Activated T-helper 2 cell treated with anti-CD3 and anti-CD28 coated beads, Interferon-gamma antibody, Interleukin-2, Interleukin-4, amounts not matched to agents 10 μg/mL and 5 μg/mL and 100 μg/mL, durations not matched to agents 14 hours and 24 hours and 36 hours (primary cell): ENCODE measurements at regions of chr7 and their contacts with region 1.

Region 1: GRCh38 chr7:1503816-1504775 is at the start of gene INTS1:
- DNase-seq: peak; percentile 88
- H3K4me3 Mint-ChIP-seq: peak within 1 kb of the TSS; percentile 89
- H3K27ac Mint-ChIP-seq: peak within 1 kb of the TSS; percentile 80
- H3K4me1 Mint-ChIP-seq: peaks cover 37% of the 10 kb centered on the region
- H3K27me3 Mint-ChIP-seq: no peaks in the 10 kb centered on the region
- total RNA-seq, gene INTS1: 86.7 and 91.0 TPM in 2 replicates

Region 2: GRCh38 chr7:1459522-1459892 is 44.6 kb before region 1 on chr7:
- intact Hi-C with region 1: loop called (anchors 1 kb)
- DNase-seq: peak; percentile 95
- H3K4me3 Mint-ChIP-seq: no peak overlapping the region
- H3K27ac Mint-ChIP-seq: no peak overlapping the region
- H3K4me1 Mint-ChIP-seq: no peaks in the 10 kb centered on the region
- H3K27me3 Mint-ChIP-seq: peaks cover 6% of the 10 kb centered on the region

Region 3: GRCh38 chr7:1532483-1533424 is 28.7 kb after region 1 on chr7:
- intact Hi-C with region 1: loop called (anchors 1 kb)
- DNase-seq: peak; percentile 54
- H3K4me3 Mint-ChIP-seq: peak overlapping the region; percentile 88
- H3K27ac Mint-ChIP-seq: peak overlapping the region; percentile 87
- H3K4me1 Mint-ChIP-seq: peaks cover 23% of the 10 kb centered on the region
- H3K27me3 Mint-ChIP-seq: no peaks in the 10 kb centered on the region

Region 4: GRCh38 chr7:1545389-1546246 is 41.5 kb after region 1 on chr7:
- intact Hi-C with region 1: no loop called
- DNase-seq: no peak
- H3K4me3 Mint-ChIP-seq: no peak overlapping the region
- H3K27ac Mint-ChIP-seq: no peak overlapping the region
- H3K4me1 Mint-ChIP-seq: no peaks in the 10 kb centered on the region
- H3K27me3 Mint-ChIP-seq: no peaks in the 10 kb centered on the region

Region 5: DNA sequence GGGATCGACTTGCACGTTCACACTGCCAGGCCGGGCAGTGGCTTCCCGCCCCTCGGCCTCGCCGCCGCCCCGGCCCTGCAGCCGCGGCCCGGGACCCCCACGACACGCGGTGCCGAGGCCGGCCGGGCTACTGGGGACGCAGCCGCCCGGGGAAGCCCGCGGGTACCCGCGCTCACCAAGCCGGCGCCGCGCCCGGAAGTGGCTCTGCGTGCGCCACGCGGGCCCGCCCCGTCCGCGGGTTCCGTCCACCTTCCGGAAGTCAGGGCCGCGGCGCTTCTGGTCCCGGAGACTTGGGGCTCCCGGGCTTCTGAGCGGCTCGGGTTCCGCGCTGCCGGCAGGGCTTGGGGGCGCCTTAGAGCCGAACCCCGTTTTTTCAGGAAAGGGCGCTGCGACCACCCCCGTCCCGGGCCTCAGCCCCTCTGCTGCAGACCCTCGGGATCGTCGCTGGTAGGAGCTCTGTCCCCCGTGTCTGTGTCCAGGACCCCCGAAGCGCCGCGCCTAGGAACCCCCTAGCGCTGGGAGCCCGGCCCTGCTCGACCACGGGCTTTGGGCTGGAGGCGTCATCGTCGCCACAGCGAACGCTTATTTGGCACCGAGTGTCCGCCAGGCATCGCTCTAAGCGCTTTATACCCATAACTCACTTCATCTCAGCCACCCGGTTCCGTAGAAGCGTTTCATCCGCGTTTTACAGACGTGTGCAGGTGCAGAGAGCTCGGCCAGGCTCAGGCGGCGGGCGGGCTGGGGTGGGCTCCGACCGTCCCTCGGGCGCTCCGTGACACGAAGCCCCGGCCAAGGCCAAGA is 65.9 kb after region 1 on chr7 and contains the start of gene PSMG3:
- intact Hi-C with region 1: loop called (anchors 1 kb)
- DNase-seq: peak; percentile 84
- H3K4me3 Mint-ChIP-seq: peak within 1 kb of the TSS; percentile 89
- H3K27ac Mint-ChIP-seq: peak within 1 kb of the TSS; percentile 88
- H3K4me1 Mint-ChIP-seq: peaks cover 25% of the 10 kb centered on the region
- H3K27me3 Mint-ChIP-seq: no peaks in the 10 kb centered on the region
- total RNA-seq, gene PSMG3: 44.5 and 45.9 TPM in 2 replicates